B cell (primary cell): ENCODE measurements at regions of chr17 and their contacts with region 1.

Region 1: GRCh38 chr17:49763735-49764558 is at the start of gene FAM117A:
- DNase-seq: peak; percentile 98
- ATAC-seq: peak; percentile 89
- H3K4me3 ChIP-seq: peak within 1 kb of the TSS; percentile 63 to 77 (median 76)
- H3K4me3 Mint-ChIP-seq: peak within 1 kb of the TSS; percentile 96
- H3K27ac ChIP-seq: peak within 1 kb of the TSS; percentile 39 to 63
- H3K27ac Mint-ChIP-seq: peak within 1 kb of the TSS; percentile 87
- H3K4me1 ChIP-seq: peaks cover 42 to 46% of the 10 kb centered on the region in 2 donors
- H3K4me1 Mint-ChIP-seq: peaks cover 52% of the 10 kb centered on the region
- H3K27me3 ChIP-seq: no peaks in the 10 kb centered on the region
- H3K27me3 Mint-ChIP-seq: no peaks in the 10 kb centered on the region
- CTCF ChIP-seq: no peak
- total RNA-seq, gene FAM117A: 93.3 and 93.4 TPM in 2 replicates

Region 2: GRCh38 chr17:49739641-49740271 is 24.2 kb before region 1 on chr17:
- CTCF ChIA-PET with region 1: interaction called, 8 read pairs
- POLR2A ChIA-PET with region 1: interaction called, 55 read pairs
- intact Hi-C with region 1: loop called (anchors 1 kb)
- DNase-seq: peak; percentile 97
- ATAC-seq: peak; percentile 96
- H3K4me3 ChIP-seq: peak overlapping the region; percentile 4 to 57 (median 52)
- H3K4me3 Mint-ChIP-seq: peak overlapping the region; percentile 95
- H3K27ac ChIP-seq: peak overlapping the region; percentile 89 to 98
- H3K27ac Mint-ChIP-seq: peak overlapping the region; percentile 100
- H3K4me1 ChIP-seq: peaks cover 76 to 84% of the 10 kb centered on the region in 2 donors
- H3K4me1 Mint-ChIP-seq: peaks cover 85% of the 10 kb centered on the region
- H3K27me3 ChIP-seq: no peaks in the 10 kb centered on the region
- H3K27me3 Mint-ChIP-seq: no peaks in the 10 kb centered on the region
- CTCF ChIP-seq: no peak

Region 3: DNA sequence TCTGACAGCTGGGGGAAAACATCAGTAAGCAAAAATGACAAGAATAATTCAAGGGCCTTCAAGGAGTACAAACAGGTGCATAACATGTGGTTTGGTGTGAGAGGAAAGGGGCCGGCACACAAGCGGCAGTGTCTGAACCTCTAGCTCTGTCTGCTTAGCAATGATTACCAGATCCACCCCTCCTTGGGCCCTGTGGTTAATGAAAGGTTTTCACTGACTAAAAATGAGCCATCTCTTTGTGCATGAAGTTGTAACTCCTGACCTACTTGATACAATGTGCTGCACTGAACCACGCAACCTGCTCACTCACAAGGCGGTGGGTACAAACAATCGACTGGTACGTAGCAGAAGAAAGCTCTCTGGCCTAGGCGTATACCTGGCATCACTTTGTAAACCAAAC is 15.2 kb before region 1 on chr17:
- CTCF ChIA-PET with region 1: interaction called, 55 read pairs
- POLR2A ChIA-PET with region 1: interaction called, 75 read pairs
- intact Hi-C with region 1: loop called (anchors 1 kb)
- DNase-seq: peak; percentile 67
- ATAC-seq: peak; percentile 64
- H3K4me3 ChIP-seq: peak overlapping the region in 1 of 5 experiments; percentile 6
- H3K4me3 Mint-ChIP-seq: peak overlapping the region; percentile 93
- H3K27ac ChIP-seq: peak overlapping the region; percentile 89 to 95
- H3K27ac Mint-ChIP-seq: peak overlapping the region; percentile 98
- H3K4me1 ChIP-seq: peaks cover 68 to 78% of the 10 kb centered on the region in 2 donors
- H3K4me1 Mint-ChIP-seq: peaks cover 82% of the 10 kb centered on the region
- H3K27me3 ChIP-seq: no peaks in the 10 kb centered on the region
- H3K27me3 Mint-ChIP-seq: no peaks in the 10 kb centered on the region
- CTCF ChIP-seq: no peak

Region 4: DNA sequence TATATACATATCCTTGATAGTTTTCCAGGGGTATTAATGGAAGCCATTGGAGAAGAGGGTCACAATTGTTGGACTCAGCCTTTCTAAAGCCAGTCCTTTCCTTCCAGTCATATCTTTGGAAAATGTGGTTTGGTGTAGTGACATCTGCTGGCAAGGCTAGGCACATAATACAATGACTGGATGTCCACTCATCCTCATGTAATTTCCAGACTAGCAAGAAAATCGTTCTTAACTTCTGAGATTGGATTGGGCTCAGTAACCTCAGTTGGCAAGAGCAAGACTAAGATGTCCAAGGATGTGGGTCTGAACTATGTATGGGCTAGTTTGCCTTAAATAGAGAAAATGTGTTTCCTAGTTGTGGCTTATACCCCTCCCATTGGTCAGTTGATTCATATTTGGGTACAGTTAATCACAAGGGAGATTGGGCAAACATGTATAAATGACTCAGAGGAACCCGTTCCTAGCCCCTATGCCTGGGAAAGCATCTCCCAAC is 15.8 kb after region 1 on chr17:
- CTCF ChIA-PET with region 1: interaction called, 12 read pairs
- POLR2A ChIA-PET with region 1: no interaction called
- intact Hi-C with region 1: no loop called
- DNase-seq: peak; percentile 58
- ATAC-seq: peak; percentile 60
- H3K4me3 ChIP-seq: no peak overlapping the region
- H3K4me3 Mint-ChIP-seq: no peak overlapping the region
- H3K27ac ChIP-seq: no peak overlapping the region
- H3K27ac Mint-ChIP-seq: no peak overlapping the region
- H3K4me1 ChIP-seq: no peaks in the 10 kb centered on the region
- H3K4me1 Mint-ChIP-seq: peaks cover 3% of the 10 kb centered on the region
- H3K27me3 ChIP-seq: no peaks in the 10 kb centered on the region
- H3K27me3 Mint-ChIP-seq: no peaks in the 10 kb centered on the region
- CTCF ChIP-seq: peak; percentile 52